ENCODE measurements at regions of chr9 and their contacts with region 1.

Region 1: GRCh38 chr9:73104342-73104741 is 47.3 kb upstream of the ANXA1 start:
- DNase-seq: no peak
- H3K4me3 ChIP-seq: no peak overlapping the region
- H3K27ac ChIP-seq: no peak overlapping the region
- H3K4me1 ChIP-seq: no peaks in the 10 kb centered on the region
- H3K27me3 ChIP-seq: no peaks in the 10 kb centered on the region
- CTCF ChIP-seq: no peak
- POLR2A ChIP-seq: no peak

Region 2: DNA sequence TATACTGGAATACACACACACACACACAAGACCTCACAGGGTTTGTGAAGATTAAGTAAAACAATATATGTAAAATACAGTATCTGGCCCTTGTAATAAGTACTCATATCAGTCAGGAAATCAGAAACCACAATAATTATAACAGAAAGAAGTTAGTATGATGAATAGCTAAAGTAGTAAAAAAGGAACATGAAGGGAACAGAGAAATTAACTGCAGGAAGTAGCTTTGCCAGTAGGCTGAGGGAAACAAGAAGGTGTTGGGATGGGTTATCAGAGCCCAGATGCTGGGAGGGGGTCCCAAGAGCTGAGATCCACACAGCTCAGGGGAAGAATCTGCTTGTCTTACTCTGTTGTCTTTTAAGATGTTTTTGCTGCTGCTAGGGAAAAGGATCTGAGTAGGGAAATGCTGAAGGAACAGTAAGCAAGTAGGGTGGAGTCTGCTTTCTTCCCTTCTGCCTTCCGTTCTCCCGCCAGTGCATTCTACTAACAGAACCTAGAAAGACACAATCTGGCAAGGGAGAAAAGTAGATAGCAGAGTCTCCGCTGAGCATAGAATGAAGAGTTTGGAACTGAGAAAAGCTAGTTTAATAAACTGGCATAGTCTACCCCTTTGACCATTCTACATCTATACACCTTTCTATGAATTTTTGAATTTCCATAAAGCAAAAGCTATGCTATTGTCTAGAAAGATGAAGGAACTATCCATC is 96.2 kb before region 1 on chr9:
- intact Hi-C with region 1: no loop called
- DNase-seq: no peak
- H3K4me3 ChIP-seq: no peak overlapping the region
- H3K27ac ChIP-seq: no peak overlapping the region
- H3K4me1 ChIP-seq: no peaks in the 10 kb centered on the region
- H3K27me3 ChIP-seq: peaks cover 5% of the 10 kb centered on the region
- CTCF ChIP-seq: no peak
- POLR2A ChIP-seq: no peak

Region 3: GRCh38 chr9:73183917-73184861 is 79.8 kb after region 1 on chr9:
- intact Hi-C with region 1: loop called (anchors 2 to 5 kb)
- DNase-seq: no peak
- H3K4me3 ChIP-seq: no peak overlapping the region
- H3K27ac ChIP-seq: no peak overlapping the region
- H3K4me1 ChIP-seq: peaks cover 0 to 10% of the 10 kb centered on the region in 2 donors
- H3K27me3 ChIP-seq: no peaks in the 10 kb centered on the region
- CTCF ChIP-seq: peak; percentile 45 to 73 (median 59)
- POLR2A ChIP-seq: no peak

Region 4: DNA sequence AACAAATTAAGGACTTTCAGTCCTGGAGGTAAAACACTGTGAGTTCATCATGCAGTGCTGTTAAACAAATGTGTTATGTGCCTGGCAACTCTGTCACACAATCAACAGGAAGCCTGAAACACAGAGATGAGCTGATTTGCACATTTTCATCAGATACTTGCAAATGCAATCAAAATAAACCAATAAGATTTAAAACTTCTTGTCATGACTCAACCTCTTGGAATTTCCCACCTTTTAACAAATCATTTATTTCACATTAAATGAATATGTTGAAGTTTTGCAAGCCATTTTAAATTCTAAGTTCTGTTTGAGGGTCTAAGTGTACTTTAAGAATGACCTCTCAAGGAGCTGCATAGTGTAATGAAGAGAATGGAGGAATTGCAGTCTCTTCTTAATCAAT is 111.8 kb after region 1 on chr9:
- intact Hi-C with region 1: no loop called
- DNase-seq: no peak
- H3K4me3 ChIP-seq: no peak overlapping the region
- H3K27ac ChIP-seq: no peak overlapping the region
- H3K4me1 ChIP-seq: no peaks in the 10 kb centered on the region
- H3K27me3 ChIP-seq: no peaks in the 10 kb centered on the region
- CTCF ChIP-seq: no peak
- POLR2A ChIP-seq: no peak

Region 5: DNA sequence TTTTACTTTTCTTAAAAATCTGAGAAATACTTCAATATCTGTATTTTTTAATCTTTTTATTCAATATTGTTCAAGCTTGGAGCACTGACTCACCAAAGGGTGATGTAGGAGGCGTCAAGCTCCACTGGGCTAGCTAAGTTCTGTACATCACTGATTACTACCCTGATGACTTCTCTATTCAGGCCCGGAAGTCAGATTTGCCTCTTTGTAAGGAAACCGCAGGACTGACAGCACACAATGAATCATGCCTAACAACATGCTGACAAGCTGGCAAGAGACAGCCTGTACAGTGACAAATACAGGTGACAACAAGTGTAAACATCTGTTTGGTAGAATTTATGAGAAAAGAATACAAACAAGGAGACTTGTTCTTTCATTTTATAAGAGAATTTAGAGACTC is 764.9 kb after region 1 on chr9:
- intact Hi-C with region 1: no loop called
- DNase-seq: no peak
- H3K4me3 ChIP-seq: no peak overlapping the region
- H3K27ac ChIP-seq: no peak overlapping the region
- H3K4me1 ChIP-seq: no peaks in the 10 kb centered on the region
- H3K27me3 ChIP-seq: no peaks in the 10 kb centered on the region
- CTCF ChIP-seq: no peak
- POLR2A ChIP-seq: no peak

Measured in adrenal gland (tissue), 19 donors.